ENCODE measurements at regions of chr18 and their contacts with region 1.

Region 1: GRCh38 chr18:74204526-74205152 is 56.3 kb downstream of the TIMM21 start:
- DNase-seq: no peak
- H3K4me3 ChIP-seq: no peak overlapping the region
- H3K27ac ChIP-seq: no peak overlapping the region
- H3K4me1 ChIP-seq: no peaks in the 10 kb centered on the region
- H3K27me3 ChIP-seq: no peaks in the 10 kb centered on the region
- CTCF ChIP-seq: no peak

Region 2: GRCh38 chr18:74234326-74235171 is 29.9 kb after region 1 on chr18:
- intact Hi-C with region 1: no loop called
- DNase-seq: peak in 1 of 2 donors; percentile 29
- H3K4me3 ChIP-seq: no peak overlapping the region
- H3K27ac ChIP-seq: peak overlapping the region; percentile 31 to 56
- H3K4me1 ChIP-seq: peaks cover 0 to 19% (median 11%) of the 10 kb centered on the region in 4 donors
- H3K27me3 ChIP-seq: no peaks in the 10 kb centered on the region
- CTCF ChIP-seq: no peak

Region 3: GRCh38 chr18:74356959-74357358 is 152.3 kb after region 1 on chr18:
- intact Hi-C with region 1: no loop called
- DNase-seq: no peak
- H3K4me3 ChIP-seq: no peak overlapping the region
- H3K27ac ChIP-seq: no peak overlapping the region
- H3K4me1 ChIP-seq: peaks cover 0 to 16% (median 2%) of the 10 kb centered on the region in 4 donors
- H3K27me3 ChIP-seq: no peaks in the 10 kb centered on the region
- CTCF ChIP-seq: no peak

Region 4: GRCh38 chr18:74378179-74378682 is 173.6 kb after region 1 on chr18:
- intact Hi-C with region 1: no loop called
- DNase-seq: peak; percentile 68 to 93
- H3K4me3 ChIP-seq: no peak overlapping the region
- H3K27ac ChIP-seq: peak overlapping the region; percentile 62 to 67
- H3K4me1 ChIP-seq: peaks cover 0 to 23% (median 17%) of the 10 kb centered on the region in 4 donors
- H3K27me3 ChIP-seq: no peaks in the 10 kb centered on the region
- CTCF ChIP-seq: no peak

Region 5: DNA sequence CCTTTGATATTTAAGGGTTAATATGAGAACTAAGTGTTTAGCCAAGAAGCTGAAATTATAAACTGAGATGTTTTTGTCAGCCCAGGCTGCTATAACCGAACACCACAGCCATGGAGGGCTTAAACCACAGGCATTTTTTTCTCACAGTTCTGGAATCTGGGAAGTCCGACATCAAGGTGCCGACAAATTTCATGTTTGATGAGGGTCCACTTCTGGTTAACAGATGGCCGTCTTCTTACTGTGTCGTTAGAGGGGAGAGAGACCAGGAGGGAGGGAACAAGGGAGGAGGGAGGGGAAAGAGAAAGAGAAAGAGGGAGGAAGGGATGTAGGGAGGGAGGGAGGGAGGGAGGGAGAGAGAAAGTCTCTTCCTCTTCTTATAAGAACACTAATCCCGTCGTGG is 285.0 kb after region 1 on chr18:
- intact Hi-C with region 1: loop called (anchors 10 kb)
- DNase-seq: no peak
- H3K4me3 ChIP-seq: no peak overlapping the region
- H3K27ac ChIP-seq: no peak overlapping the region
- H3K4me1 ChIP-seq: peaks cover 0 to 15% (median 6%) of the 10 kb centered on the region in 4 donors
- H3K27me3 ChIP-seq: peaks cover 0 to 3% of the 10 kb centered on the region in 2 donors
- CTCF ChIP-seq: no peak

Region 6: DNA sequence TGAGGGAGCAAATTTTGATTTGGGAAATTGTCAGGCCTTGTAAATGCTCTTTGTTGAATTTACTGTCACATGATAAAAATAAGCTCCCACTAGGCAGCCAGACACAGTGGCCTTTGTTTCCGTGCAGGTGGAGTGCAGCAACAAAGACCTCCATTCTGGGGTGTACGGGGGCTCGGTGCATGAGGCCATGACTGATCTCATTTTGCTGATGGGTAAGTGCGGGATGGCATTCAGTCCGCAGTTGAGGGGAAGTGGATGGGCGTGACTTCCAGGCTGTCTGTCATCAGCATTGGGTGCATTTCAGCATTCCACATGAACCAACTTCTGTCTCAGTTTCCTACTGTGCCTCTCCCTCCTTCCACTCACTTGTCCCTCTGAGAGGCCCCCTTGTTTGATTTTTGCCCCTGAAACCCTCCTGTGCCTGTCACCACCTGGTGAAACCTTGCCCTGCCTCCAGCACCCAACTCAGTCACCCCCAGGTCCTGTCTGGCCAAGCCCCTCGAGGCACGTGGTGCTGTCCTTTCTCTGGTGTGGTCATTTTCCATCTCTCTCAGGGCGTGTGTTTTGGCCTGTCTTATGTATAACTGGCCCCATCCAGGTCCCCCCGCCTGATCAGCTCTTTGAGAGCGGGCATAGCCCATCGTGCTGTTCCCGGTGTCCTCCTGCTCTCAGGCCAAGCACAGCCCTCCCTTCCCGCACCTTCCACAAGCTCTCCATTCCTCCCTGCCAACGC is 307.8 kb after region 1 on chr18:
- intact Hi-C with region 1: no loop called
- DNase-seq: peak in 1 of 2 donors; percentile 19
- H3K4me3 ChIP-seq: no peak overlapping the region
- H3K27ac ChIP-seq: no peak overlapping the region
- H3K4me1 ChIP-seq: no peaks in the 10 kb centered on the region
- H3K27me3 ChIP-seq: no peaks in the 10 kb centered on the region
- CTCF ChIP-seq: no peak